IMR-90 (cell line): ENCODE measurements at regions of chr14 and their contacts with region 1.

Region 1: GRCh38 chr14:41285186-41285748 is 321.4 kb upstream of the LRFN5 start:
- DNase-seq: peak; percentile 1
- ATAC-seq: no peak
- H3K4me3 ChIP-seq: no peak overlapping the region
- H3K27ac ChIP-seq: no peak overlapping the region
- H3K4me1 ChIP-seq: no peaks in the 10 kb centered on the region
- H3K27me3 ChIP-seq: no peaks in the 10 kb centered on the region
- CTCF ChIP-seq: no peak
- POLR2A ChIP-seq: no peak
- RAD21 ChIP-seq: no peak

Region 2: GRCh38 chr14:41609704-41610183 is 324.5 kb after region 1 on chr14:
- CTCF ChIA-PET with region 1: no interaction called
- POLR2A ChIA-PET with region 1: no interaction called
- dilution Hi-C with region 1: no loop called
- in situ Hi-C with region 1: no loop called
- intact Hi-C with region 1: loop called (anchors 10 kb)
- DNase-seq: peak; percentile 58
- ATAC-seq: peak; percentile 43
- H3K4me3 ChIP-seq: peak overlapping the region; percentile 18
- H3K27ac ChIP-seq: no peak overlapping the region
- H3K4me1 ChIP-seq: no peaks in the 10 kb centered on the region
- H3K27me3 ChIP-seq: peaks cover 20% of the 10 kb centered on the region
- CTCF ChIP-seq: peak; percentile 46
- POLR2A ChIP-seq: no peak
- RAD21 ChIP-seq: peak; percentile 57

Region 3: DNA sequence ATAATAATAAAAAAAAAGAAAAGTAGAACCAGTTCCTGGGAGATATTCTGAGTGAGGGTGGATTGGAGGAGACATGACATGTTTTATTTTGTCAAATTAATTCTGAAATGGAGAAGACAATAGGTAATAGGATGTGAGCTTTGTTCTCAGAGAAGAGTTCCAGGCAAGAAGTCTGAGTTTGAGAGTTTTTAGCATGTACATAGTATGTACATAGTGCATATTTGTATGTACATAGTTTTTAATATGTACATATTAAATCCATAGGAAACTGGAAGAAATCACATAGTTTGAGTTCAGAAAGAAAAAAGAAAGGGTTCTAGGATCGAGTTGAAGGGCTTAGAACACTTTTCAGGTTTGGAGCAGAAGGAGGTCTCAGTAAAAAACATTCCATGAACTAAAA is 368.9 kb after region 1 on chr14:
- CTCF ChIA-PET with region 1: no interaction called
- POLR2A ChIA-PET with region 1: no interaction called
- dilution Hi-C with region 1: no loop called
- in situ Hi-C with region 1: no loop called
- intact Hi-C with region 1: no loop called
- DNase-seq: no peak
- ATAC-seq: no peak
- H3K4me3 ChIP-seq: no peak overlapping the region
- H3K27ac ChIP-seq: no peak overlapping the region
- H3K4me1 ChIP-seq: no peaks in the 10 kb centered on the region
- H3K27me3 ChIP-seq: no peaks in the 10 kb centered on the region
- CTCF ChIP-seq: no peak
- POLR2A ChIP-seq: no peak
- RAD21 ChIP-seq: no peak